Colonic mucosa (tissue), 4 donors: ENCODE measurements at regions of chr14 and their contacts with region 1.

Region 1: GRCh38 chr14:68843471-68844209 is 50.8 kb upstream of the ZFP36L1 start:
- DNase-seq: peak; percentile 77
- H3K4me3 ChIP-seq: no peak overlapping the region
- H3K27ac ChIP-seq: no peak overlapping the region
- H3K4me1 ChIP-seq: no peaks in the 10 kb centered on the region
- H3K27me3 ChIP-seq: no peaks in the 10 kb centered on the region
- CTCF ChIP-seq: peak; percentile 91

Region 2: GRCh38 chr14:67883717-67884116 is 959.9 kb before region 1 on chr14:
- intact Hi-C with region 1: loop called (anchors 5 kb)
- DNase-seq: no peak
- H3K4me3 ChIP-seq: no peak overlapping the region
- H3K27ac ChIP-seq: no peak overlapping the region
- H3K4me1 ChIP-seq: no peaks in the 10 kb centered on the region
- H3K27me3 ChIP-seq: no peaks in the 10 kb centered on the region
- CTCF ChIP-seq: no peak

Region 3: GRCh38 chr14:67934008-67934481 is 909.6 kb before region 1 on chr14:
- intact Hi-C with region 1: loop called (anchors 5 kb)
- DNase-seq: no peak
- H3K4me3 ChIP-seq: no peak overlapping the region
- H3K27ac ChIP-seq: no peak overlapping the region
- H3K4me1 ChIP-seq: no peaks in the 10 kb centered on the region
- H3K27me3 ChIP-seq: no peaks in the 10 kb centered on the region
- CTCF ChIP-seq: peak; percentile 61

Region 4: DNA sequence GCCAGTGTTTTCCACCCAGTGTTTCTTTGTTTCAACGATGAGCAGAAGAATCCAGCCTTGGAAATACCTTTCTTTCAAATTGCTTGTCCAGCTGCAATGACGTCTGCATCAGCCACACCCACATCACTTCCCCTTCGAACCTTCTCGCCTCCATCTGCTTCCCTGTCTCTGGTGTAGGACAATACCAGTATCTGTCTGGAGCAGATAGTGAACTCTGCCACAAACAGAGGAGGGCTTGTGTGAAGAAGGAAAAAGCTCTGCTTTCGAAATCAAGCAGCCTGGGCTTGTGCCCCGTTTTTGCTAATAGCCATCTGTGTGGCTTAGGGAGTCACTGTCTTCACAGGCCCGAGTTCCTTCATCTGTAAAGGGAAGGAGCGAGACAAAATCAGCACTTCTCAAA is 466.2 kb before region 1 on chr14:
- intact Hi-C with region 1: no loop called
- DNase-seq: peak; percentile 79
- H3K4me3 ChIP-seq: no peak overlapping the region
- H3K27ac ChIP-seq: peak overlapping the region; percentile 56
- H3K4me1 ChIP-seq: no peaks in the 10 kb centered on the region
- H3K27me3 ChIP-seq: no peaks in the 10 kb centered on the region
- CTCF ChIP-seq: no peak